ENCODE measurements at regions of chr9 and their contacts with region 1.

Region 1: DNA sequence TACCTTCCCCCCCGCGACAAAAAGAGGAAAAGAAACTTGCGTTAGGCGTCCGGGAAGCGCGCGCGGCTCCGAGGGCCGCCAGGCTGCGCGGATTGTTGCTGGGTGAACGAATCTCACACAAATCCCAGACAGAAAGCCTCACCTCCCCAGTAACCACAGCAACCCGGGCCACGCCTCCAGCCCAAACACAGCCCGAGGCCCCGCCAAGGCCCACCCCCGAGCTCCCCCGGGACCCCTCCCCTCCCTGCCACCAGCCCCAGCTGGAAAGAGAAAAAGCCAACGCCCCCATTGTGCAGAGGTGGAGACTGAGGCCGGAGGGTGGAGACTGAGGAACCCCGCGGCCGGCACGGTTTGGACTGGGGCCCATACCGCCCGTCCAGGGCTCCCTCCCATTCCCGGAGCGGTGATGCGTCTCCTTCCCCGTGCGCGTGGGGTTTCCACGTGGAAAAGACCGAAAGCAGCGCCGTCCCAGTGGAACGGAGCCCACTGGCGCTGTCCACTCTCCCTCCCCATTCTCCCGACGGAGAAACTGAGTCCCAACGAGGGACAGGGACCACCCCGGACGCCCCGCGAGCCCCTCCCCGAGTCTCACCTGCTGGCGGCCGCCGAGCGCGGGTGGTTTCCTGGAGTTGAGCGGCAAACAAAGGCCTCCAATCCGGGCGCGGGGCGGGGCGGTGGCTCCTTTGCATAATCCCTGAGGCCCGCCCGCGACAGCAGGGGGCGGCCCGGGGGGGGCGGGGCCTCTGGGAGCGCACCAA is 10.2 kb upstream of the AKNA start:
- DNase-seq: peak; percentile 91 to 98 (median 96)
- ATAC-seq: peak; percentile 85
- H3K4me3 ChIP-seq: peak overlapping the region; percentile 98
- H3K4me3 Mint-ChIP-seq: peak overlapping the region; percentile 98
- H3K27ac ChIP-seq: peak overlapping the region; percentile 92 to 97
- H3K27ac Mint-ChIP-seq: peak overlapping the region; percentile 97
- H3K4me1 ChIP-seq: peaks cover 45% of the 10 kb centered on the region
- H3K4me1 Mint-ChIP-seq: peaks cover 50% of the 10 kb centered on the region
- H3K27me3 ChIP-seq: no peaks in the 10 kb centered on the region
- H3K27me3 Mint-ChIP-seq: no peaks in the 10 kb centered on the region
- CTCF ChIP-seq: no peak

Region 2: GRCh38 chr9:114250235-114250568 is 147.8 kb before region 1 on chr9:
- CTCF ChIA-PET with region 1: no interaction called
- POLR2A ChIA-PET with region 1: no interaction called
- intact Hi-C with region 1: no loop called
- DNase-seq: no peak
- ATAC-seq: no peak
- H3K4me3 ChIP-seq: no peak overlapping the region
- H3K4me3 Mint-ChIP-seq: no peak overlapping the region
- H3K27ac ChIP-seq: no peak overlapping the region
- H3K27ac Mint-ChIP-seq: no peak overlapping the region
- H3K4me1 ChIP-seq: no peaks in the 10 kb centered on the region
- H3K4me1 Mint-ChIP-seq: no peaks in the 10 kb centered on the region
- H3K27me3 ChIP-seq: no peaks in the 10 kb centered on the region
- H3K27me3 Mint-ChIP-seq: no peaks in the 10 kb centered on the region
- CTCF ChIP-seq: no peak

Region 3: DNA sequence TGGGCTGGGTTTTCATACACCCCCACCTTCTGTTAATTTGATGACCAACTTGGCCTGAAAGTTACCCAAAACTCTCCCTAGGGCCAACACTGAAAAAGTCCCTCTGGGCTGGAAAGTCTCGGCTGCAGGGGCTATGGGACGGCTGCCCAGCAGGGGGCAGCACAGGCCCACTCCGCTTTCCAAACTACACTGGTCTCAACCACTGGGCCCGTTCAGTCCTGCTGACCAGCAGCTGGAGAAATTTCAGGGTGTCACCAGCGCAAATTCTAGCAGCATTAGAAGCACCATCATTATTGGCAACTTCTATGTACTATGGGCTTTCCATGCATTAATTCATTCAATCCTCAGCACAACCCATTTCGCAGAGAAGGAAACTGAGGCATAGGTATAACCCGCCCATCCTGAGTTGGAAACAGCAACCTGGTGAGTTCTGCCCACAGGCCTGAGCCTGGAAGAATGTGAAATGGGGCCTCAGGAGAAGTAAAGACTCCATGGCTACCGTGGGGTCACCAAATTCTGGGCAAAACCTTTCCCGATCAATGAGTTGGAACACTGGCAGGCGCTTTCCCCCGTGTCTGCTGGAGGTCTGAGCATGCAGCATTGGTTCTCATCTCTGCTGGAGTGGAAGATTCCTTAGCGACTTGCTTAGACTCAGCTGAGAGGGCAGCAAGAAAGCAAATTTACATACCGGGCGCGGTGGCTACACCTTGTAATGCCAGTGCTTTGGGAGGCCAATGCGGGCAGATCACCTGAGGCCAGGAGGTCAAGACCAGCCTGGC is 58.7 kb before region 1 on chr9:
- CTCF ChIA-PET with region 1: interaction called, 35 read pairs
- POLR2A ChIA-PET with region 1: interaction called, 4 read pairs
- intact Hi-C with region 1: no loop called
- DNase-seq: peak; percentile 27 to 76 (median 52)
- ATAC-seq: peak; percentile 65
- H3K4me3 ChIP-seq: no peak overlapping the region
- H3K4me3 Mint-ChIP-seq: no peak overlapping the region
- H3K27ac ChIP-seq: peak overlapping the region in 1 of 2 experiments; percentile 40
- H3K27ac Mint-ChIP-seq: peak overlapping the region; percentile 45
- H3K4me1 ChIP-seq: no peaks in the 10 kb centered on the region
- H3K4me1 Mint-ChIP-seq: peaks cover 34% of the 10 kb centered on the region
- H3K27me3 ChIP-seq: no peaks in the 10 kb centered on the region
- H3K27me3 Mint-ChIP-seq: no peaks in the 10 kb centered on the region
- CTCF ChIP-seq: peak; percentile 83

Region 4: GRCh38 chr9:114372921-114373448 is 25.0 kb before region 1 on chr9:
- CTCF ChIA-PET with region 1: interaction called, 22 read pairs
- POLR2A ChIA-PET with region 1: interaction called, 9 read pairs
- intact Hi-C with region 1: loop called (anchors 1 kb)
- DNase-seq: peak; percentile 70 to 98 (median 86)
- ATAC-seq: peak; percentile 80
- H3K4me3 ChIP-seq: peak overlapping the region; percentile 28 to 36
- H3K4me3 Mint-ChIP-seq: peak overlapping the region; percentile 83
- H3K27ac ChIP-seq: peak overlapping the region; percentile 72 to 98
- H3K27ac Mint-ChIP-seq: peak overlapping the region; percentile 89
- H3K4me1 ChIP-seq: peaks cover 95% of the 10 kb centered on the region
- H3K4me1 Mint-ChIP-seq: peaks cover 89% of the 10 kb centered on the region
- H3K27me3 ChIP-seq: no peaks in the 10 kb centered on the region
- H3K27me3 Mint-ChIP-seq: no peaks in the 10 kb centered on the region
- CTCF ChIP-seq: no peak

Region 5: DNA sequence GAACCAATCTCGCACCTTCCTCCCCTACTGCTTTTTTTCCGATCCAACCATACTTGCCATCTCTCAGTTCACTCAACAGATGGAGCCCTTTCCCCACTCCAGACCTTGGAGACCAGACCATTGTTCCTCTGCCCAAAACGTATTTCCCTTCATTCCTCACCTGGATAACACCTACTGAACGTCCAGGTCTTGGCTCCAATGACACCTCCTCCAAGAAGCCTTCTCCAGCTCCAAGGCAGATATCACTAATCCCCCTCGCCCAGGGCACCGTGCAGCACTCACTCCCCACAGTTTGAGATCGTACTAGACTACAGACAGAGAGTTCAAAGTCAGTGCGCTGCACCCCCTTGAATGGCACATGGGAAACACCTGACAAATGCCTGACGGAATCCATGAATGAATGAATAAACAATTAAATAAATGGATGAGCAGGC is 36.9 kb after region 1 on chr9:
- CTCF ChIA-PET with region 1: interaction called, 3 read pairs
- POLR2A ChIA-PET with region 1: no interaction called
- intact Hi-C with region 1: loop called in 1 of 2 experiments (anchors 1 kb)
- DNase-seq: peak in 3 of 9 experiments; percentile 25 to 43 (median 43)
- ATAC-seq: no peak
- H3K4me3 ChIP-seq: no peak overlapping the region
- H3K4me3 Mint-ChIP-seq: no peak overlapping the region
- H3K27ac ChIP-seq: no peak overlapping the region
- H3K27ac Mint-ChIP-seq: no peak overlapping the region
- H3K4me1 ChIP-seq: no peaks in the 10 kb centered on the region
- H3K4me1 Mint-ChIP-seq: peaks cover 5% of the 10 kb centered on the region
- H3K27me3 ChIP-seq: no peaks in the 10 kb centered on the region
- H3K27me3 Mint-ChIP-seq: no peaks in the 10 kb centered on the region
- CTCF ChIP-seq: no peak

Region 6: DNA sequence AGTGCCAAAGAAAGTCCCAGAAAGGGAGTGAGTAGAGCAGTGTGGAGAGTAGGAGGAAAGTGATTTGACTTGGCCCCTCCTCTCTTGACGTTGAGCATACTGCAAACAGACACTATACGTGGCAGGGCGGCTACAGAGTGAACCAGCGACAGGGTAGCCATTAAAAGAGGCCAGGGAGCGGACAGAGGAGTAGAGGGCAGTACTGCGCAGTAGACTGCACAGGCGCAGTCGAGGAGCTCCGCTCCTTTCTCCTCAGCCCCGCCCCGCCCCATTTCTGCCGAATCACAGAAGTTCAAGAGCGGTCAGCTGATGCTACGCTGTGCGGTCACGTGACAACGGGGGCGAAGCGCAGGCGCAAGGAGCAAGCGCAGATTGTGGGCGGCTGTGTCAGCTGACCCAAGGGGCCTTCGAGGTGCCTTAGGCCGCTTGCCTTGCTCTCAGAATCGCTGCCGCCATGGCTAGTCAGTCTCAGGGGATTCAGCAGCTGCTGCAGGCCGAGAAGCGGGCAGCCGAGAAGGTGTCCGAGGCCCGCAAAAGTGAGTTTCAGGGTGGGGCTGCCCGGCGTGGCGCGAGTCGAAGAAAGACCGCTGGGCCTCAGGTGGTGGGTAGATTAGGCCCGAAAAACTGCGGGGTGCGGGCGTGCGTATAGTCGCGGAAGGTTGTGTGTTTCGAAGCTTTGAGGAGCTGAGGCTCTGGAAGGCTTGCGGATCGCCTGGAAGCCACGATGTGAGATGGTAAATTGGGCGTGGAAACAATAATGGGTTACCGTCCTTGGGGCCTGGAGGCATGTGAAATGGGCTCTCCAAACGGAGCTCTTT is 189.6 kb after region 1 on chr9 and contains the start of gene ATP6V1G1:
- CTCF ChIA-PET with region 1: interaction called, 4 read pairs
- POLR2A ChIA-PET with region 1: interaction called, 3 read pairs
- intact Hi-C with region 1: loop called in 1 of 2 experiments (anchors 5 kb)
- DNase-seq: peak; percentile 96 to 100 (median 99)
- ATAC-seq: peak; percentile 92
- H3K4me3 ChIP-seq: peak within 1 kb of the TSS; percentile 79 to 93
- H3K4me3 Mint-ChIP-seq: peak within 1 kb of the TSS; percentile 99
- H3K27ac ChIP-seq: peak within 1 kb of the TSS; percentile 88 to 94
- H3K27ac Mint-ChIP-seq: peak within 1 kb of the TSS; percentile 100
- H3K4me1 ChIP-seq: peaks cover 36% of the 10 kb centered on the region
- H3K4me1 Mint-ChIP-seq: peaks cover 47% of the 10 kb centered on the region
- H3K27me3 ChIP-seq: no peaks in the 10 kb centered on the region
- H3K27me3 Mint-ChIP-seq: no peaks in the 10 kb centered on the region
- CTCF ChIP-seq: no peak
- total RNA-seq, gene ATP6V1G1: 141 to 147 TPM

Region 7: GRCh38 chr9:114930056-114930812 is 532.2 kb after region 1 on chr9 and contains the start of gene TNFSF8:
- CTCF ChIA-PET with region 1: interaction called, 4 read pairs
- POLR2A ChIA-PET with region 1: no interaction called
- intact Hi-C with region 1: loop called in 1 of 2 experiments (anchors 5 kb)
- DNase-seq: peak; percentile 30 to 91 (median 76)
- ATAC-seq: peak; percentile 82
- H3K4me3 ChIP-seq: peak within 1 kb of the TSS; percentile 65 to 81
- H3K4me3 Mint-ChIP-seq: peak within 1 kb of the TSS; percentile 99
- H3K27ac ChIP-seq: peak within 1 kb of the TSS; percentile 74 to 82
- H3K27ac Mint-ChIP-seq: peak within 1 kb of the TSS; percentile 99
- H3K4me1 ChIP-seq: peaks cover 35% of the 10 kb centered on the region
- H3K4me1 Mint-ChIP-seq: peaks cover 56% of the 10 kb centered on the region
- H3K27me3 ChIP-seq: no peaks in the 10 kb centered on the region
- H3K27me3 Mint-ChIP-seq: no peaks in the 10 kb centered on the region
- CTCF ChIP-seq: no peak
- total RNA-seq, gene TNFSF8: 47.7 to 49.3 TPM

Region 8: DNA sequence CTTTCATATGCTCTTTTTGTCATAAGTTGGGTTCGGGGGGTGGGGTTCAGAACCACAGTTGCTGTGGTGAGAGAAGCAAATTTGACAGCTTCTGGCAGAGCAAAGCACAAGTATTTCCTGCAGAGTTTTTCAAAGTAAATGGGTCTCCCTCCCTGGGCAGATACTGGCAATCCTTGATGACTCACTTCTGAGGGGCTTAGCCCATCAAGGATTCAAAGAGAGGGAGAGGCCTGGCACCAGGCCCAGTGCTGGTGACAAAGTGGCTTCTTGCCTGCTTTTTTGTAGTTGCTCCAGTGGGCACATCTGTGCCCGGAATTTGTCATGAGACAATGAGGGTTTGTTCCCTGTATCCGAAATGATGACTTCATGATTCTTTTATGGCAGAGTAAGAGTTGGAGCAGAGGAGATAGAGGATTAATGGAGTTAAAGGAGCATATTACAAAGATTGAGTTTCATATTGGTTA is 766.5 kb after region 1 on chr9:
- CTCF ChIA-PET with region 1: no interaction called
- POLR2A ChIA-PET with region 1: no interaction called
- intact Hi-C with region 1: no loop called
- DNase-seq: no peak
- ATAC-seq: no peak
- H3K4me3 ChIP-seq: no peak overlapping the region
- H3K4me3 Mint-ChIP-seq: no peak overlapping the region
- H3K27ac ChIP-seq: no peak overlapping the region
- H3K27ac Mint-ChIP-seq: no peak overlapping the region
- H3K4me1 ChIP-seq: no peaks in the 10 kb centered on the region
- H3K4me1 Mint-ChIP-seq: no peaks in the 10 kb centered on the region
- H3K27me3 ChIP-seq: no peaks in the 10 kb centered on the region
- H3K27me3 Mint-ChIP-seq: peaks cover 15% of the 10 kb centered on the region
- CTCF ChIP-seq: no peak